HepG2 (cell line): ENCODE measurements at regions of chr17 and their contacts with region 1.

Region 1: DNA sequence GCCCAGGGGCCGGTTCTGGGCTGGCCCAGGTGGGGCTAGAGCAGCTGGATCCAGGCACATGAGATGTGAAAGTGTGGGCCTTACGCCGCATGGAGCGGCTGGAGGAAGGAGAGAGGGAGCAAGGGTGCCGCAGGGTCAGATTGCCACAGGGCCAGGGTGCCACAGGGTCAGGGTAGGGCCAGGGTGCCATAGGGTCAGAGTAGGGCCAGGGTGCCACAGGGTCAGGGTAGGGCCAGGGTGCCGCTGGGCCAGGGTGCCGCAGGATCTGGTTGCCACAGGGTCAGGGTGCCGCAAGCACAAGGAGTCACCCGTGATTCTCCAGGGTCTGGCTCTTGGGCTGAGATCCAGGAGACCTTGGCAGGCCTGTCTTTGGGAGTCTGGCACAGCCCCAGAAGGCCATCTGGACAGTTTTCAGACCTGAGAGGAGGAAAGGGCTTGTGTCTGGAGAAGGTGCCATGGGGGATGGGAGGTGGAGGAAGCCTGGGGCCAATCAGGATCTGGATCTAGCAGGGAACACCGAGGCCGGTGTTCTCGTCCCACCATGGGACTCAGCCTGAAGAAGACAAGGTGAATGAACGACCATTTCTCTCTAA is 13.1 kb upstream of the LASP1NB start:
- DNase-seq: no peak
- ATAC-seq: no peak
- H3K4me3 ChIP-seq: no peak overlapping the region
- H3K27ac ChIP-seq: no peak overlapping the region
- H3K4me1 ChIP-seq: peaks cover 40% of the 10 kb centered on the region
- H3K27me3 ChIP-seq: no peaks in the 10 kb centered on the region
- CTCF ChIP-seq: no peak
- EP300 ChIP-seq: no peak
- POLR2A ChIP-seq: no peak
- RAD21 ChIP-seq: no peak

Region 2: DNA sequence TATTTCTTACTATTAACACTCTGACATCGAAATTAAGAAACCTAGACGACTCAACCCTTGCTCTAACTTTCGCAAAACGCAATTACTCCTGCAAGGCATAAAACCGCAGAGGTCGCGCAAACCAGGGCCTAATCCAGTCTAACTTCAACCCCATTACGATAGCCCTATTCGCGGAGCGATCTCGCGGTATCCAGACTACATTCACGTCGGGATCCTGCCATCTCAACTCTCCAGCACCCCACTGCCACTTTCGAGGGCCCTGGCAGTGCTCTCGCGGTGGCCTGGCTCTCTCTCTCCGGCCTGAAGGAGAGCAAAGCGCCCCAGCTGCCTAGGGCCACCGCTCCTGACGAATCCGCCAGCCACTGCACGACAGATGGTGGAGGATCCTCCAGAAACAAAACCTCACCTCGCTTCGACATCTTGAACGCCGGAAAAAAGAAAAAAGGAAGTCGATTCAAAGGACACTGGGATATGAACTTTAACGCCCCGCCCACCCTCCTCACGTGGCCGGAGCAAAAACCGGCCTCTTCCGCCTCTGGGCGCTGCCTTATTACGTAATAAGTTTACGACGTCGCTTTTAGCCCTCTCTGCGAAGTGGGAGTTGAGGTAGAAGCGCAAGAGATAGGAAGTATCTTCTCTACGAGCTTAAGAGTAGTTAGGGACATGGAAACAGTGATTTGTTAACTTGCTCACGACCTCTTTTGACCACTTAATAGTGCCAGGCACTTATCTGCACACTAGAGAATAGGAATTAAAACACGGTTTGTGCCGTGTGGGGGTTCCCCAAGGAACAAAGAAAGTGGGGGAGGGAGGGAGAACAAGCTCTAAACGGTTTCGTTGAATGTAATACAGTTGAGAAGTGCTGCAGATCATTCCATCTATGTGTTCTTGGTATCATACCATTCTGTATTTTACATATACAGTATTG is 58.8 kb before region 1 on chr17 and contains the start of gene RPL23:
- CTCF ChIA-PET with region 1: no interaction called
- POLR2A ChIA-PET with region 1: interaction called, 11 read pairs
- in situ Hi-C with region 1: no loop called
- intact Hi-C with region 1: no loop called
- DNase-seq: peak; percentile 97
- ATAC-seq: peak; percentile 91
- H3K4me3 ChIP-seq: peak within 1 kb of the TSS; percentile 78 to 88 (median 82)
- H3K27ac ChIP-seq: peak within 1 kb of the TSS; percentile 84
- H3K4me1 ChIP-seq: peaks cover 44% of the 10 kb centered on the region
- H3K27me3 ChIP-seq: no peaks in the 10 kb centered on the region; a peak in 1 of 5 replicates
- CTCF ChIP-seq: no peak
- EP300 ChIP-seq: peak; percentile 64 to 88; a peak in 3 of 4 replicates
- POLR2A ChIP-seq: peak; percentile 99
- RAD21 ChIP-seq: peak; percentile 56; the same call in 1 of the 2 replicates
- total RNA-seq, gene RPL23: 2,790 and 3,298 TPM in 2 replicates

Region 3: DNA sequence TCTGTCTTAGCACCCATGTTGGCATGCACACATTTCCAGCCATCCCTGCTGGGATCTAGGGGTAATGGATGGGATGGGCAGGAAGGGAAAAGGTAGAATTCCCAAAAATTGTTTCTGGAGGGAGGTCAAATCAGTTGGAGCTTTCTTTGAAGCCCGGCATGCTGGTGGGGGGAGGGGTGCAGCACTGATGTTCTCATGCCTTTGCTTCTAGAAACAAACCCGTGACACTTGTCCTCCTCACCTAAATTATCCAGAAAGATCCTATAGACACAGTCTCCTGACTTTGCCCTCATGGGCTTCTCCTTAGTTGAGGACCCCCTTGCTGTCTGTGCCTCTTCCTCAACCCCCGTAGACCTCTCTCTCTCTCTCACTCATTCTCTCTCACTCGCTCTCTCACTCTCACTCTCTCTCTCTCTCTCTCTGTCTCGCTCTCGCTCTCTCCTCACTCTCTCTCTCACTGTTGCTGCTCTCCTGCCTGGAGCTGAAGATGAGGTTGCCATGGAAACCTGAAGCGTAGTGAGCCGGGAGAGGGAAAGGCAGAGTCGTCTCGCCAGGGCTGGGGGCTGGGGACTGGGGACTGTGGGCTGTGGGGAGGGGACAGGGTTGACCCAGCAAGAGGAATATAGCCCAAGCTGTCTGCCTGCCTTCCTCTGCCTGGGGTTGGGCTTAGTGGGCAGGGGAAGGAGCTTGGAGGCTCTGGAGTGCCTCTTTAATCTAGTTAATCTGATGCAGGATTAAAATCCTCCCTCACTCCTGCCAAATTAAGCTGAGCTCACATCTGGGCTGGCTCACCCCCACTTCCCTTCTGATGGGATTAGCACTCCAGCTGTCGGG is 26.4 kb before region 1 on chr17:
- CTCF ChIA-PET with region 1: no interaction called
- POLR2A ChIA-PET with region 1: interaction called, 5 read pairs
- in situ Hi-C with region 1: no loop called
- intact Hi-C with region 1: loop called (anchors 1 kb)
- DNase-seq: no peak
- ATAC-seq: no peak
- H3K4me3 ChIP-seq: no peak overlapping the region
- H3K27ac ChIP-seq: no peak overlapping the region
- H3K4me1 ChIP-seq: peaks cover 37% of the 10 kb centered on the region
- H3K27me3 ChIP-seq: no peaks in the 10 kb centered on the region
- CTCF ChIP-seq: no peak
- EP300 ChIP-seq: no peak
- POLR2A ChIP-seq: 0 out of 4 replicates have a peak, but pooled peaks of 1 of the 2 experiments have one; percentile 9
- RAD21 ChIP-seq: no peak

Region 4: DNA sequence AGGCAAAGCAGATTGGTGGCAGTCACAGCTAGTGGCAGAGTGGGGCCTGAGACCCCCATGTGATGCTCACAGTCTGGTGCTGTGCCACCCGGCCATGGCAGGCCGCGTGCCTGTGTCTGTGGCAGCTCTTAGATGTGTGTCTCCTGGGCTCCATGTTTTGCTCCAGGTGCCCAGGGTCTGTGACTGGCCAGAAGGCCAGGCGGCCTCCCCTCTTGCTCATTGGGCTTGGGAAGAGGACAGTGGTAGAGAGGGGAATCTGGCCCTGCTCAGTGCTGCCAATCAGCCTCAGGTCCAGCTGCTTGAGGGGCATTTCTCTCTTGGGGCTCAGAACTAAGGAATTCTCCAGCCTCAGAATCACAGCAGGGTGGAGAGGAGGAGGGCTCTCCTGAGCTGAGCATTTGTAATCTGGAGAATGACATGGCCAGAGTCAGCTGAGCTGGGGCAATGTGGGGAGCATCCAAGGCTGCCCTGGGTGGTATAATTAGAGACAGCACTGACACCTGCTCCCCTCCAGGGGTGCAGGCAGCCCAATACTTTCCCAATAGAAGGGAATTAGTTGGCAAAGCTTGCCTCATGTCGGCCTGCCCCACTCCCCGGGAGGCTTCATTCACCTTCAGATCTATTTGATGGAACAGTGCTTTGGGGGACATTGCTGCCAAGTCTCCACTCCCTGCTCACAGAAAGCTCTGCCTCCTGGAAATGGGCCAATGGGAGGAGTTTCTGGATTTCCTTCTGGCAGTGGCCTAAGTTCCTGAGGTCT is 10.4 kb after region 1 on chr17:
- CTCF ChIA-PET with region 1: no interaction called
- POLR2A ChIA-PET with region 1: interaction called, 14 read pairs
- in situ Hi-C with region 1: no loop called
- intact Hi-C with region 1: no loop called
- DNase-seq: no peak
- ATAC-seq: peak; percentile 56
- H3K4me3 ChIP-seq: no peak overlapping the region
- H3K27ac ChIP-seq: no peak overlapping the region
- H3K4me1 ChIP-seq: peaks cover 18% of the 10 kb centered on the region
- H3K27me3 ChIP-seq: no peaks in the 10 kb centered on the region
- CTCF ChIP-seq: no peak
- EP300 ChIP-seq: no peak
- POLR2A ChIP-seq: 0 out of 4 replicates have a peak, but pooled peaks of 1 of the 2 experiments have one; percentile 14
- RAD21 ChIP-seq: no peak

Region 5: GRCh38 chr17:38939987-38940386 is 27.7 kb after region 1 on chr17:
- CTCF ChIA-PET with region 1: no interaction called
- POLR2A ChIA-PET with region 1: no interaction called
- in situ Hi-C with region 1: no loop called
- intact Hi-C with region 1: no loop called
- DNase-seq: no peak
- ATAC-seq: no peak
- H3K4me3 ChIP-seq: no peak overlapping the region
- H3K27ac ChIP-seq: no peak overlapping the region
- H3K4me1 ChIP-seq: 0 out of 2 replicates have a peak, but pooled peaks cover 4% of the 10 kb centered on the region
- H3K27me3 ChIP-seq: no peaks in the 10 kb centered on the region
- CTCF ChIP-seq: no peak
- EP300 ChIP-seq: no peak
- POLR2A ChIP-seq: no peak
- RAD21 ChIP-seq: no peak